ENCODE measurements at regions of chr13 and their contacts with region 1.

Region 1: GRCh38 chr13:109786457-109787134 is at the start of gene IRS2:
- DNase-seq: peak; percentile 85
- H3K4me3 ChIP-seq: peak within 1 kb of the TSS; percentile 51 to 78 (median 58)
- H3K27ac ChIP-seq: no peak within 1 kb of the TSS
- H3K4me1 ChIP-seq: peaks cover 3% of the 10 kb centered on the region
- H3K27me3 ChIP-seq: peaks cover 27 to 46% of the 10 kb centered on the region in 2 experiments
- CTCF ChIP-seq: no peak
- POLR2A ChIP-seq: peak; percentile 82
- total RNA-seq, gene IRS2: 4.4 and 5.9 TPM in 2 replicates

Region 2: GRCh38 chr13:108961542-108962125 is 825.0 kb before region 1 on chr13:
- CTCF ChIA-PET with region 1: interaction called, 18 read pairs
- POLR2A ChIA-PET with region 1: no interaction called
- dilution Hi-C with region 1: no loop called
- intact Hi-C with region 1: loop called (anchors 1 kb)
- DNase-seq: peak; percentile 60
- H3K4me3 ChIP-seq: no peak overlapping the region
- H3K27ac ChIP-seq: no peak overlapping the region
- H3K4me1 ChIP-seq: peaks cover 8% of the 10 kb centered on the region
- H3K27me3 ChIP-seq: no peaks in the 10 kb centered on the region
- CTCF ChIP-seq: peak; percentile 49 to 67
- POLR2A ChIP-seq: no peak

Region 3: GRCh38 chr13:108993346-108993745 is 793.2 kb before region 1 on chr13:
- CTCF ChIA-PET with region 1: no interaction called
- POLR2A ChIA-PET with region 1: no interaction called
- dilution Hi-C with region 1: no loop called
- intact Hi-C with region 1: no loop called
- DNase-seq: no peak
- H3K4me3 ChIP-seq: no peak overlapping the region
- H3K27ac ChIP-seq: no peak overlapping the region
- H3K4me1 ChIP-seq: no peaks in the 10 kb centered on the region
- H3K27me3 ChIP-seq: no peaks in the 10 kb centered on the region
- CTCF ChIP-seq: no peak
- POLR2A ChIP-seq: no peak

Region 4: DNA sequence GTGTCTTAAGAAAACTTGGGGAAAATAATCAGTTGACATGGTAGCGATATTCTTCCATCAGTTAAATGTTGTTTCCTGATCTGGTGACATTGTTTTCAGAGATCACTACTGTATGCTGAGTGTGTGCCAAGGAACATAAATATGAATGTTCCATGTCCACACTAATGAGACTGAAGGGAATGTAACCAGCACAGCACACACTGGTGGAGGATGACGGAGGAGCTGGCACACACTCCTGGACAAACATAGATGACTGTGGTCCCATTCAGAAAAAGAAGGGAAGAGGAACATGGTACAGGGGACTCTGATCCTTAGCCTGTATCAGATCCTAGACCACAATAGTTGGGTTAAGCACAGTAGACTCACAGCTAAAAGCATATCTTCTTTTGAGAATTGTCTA is 582.3 kb before region 1 on chr13:
- CTCF ChIA-PET with region 1: no interaction called
- POLR2A ChIA-PET with region 1: no interaction called
- dilution Hi-C with region 1: no loop called
- intact Hi-C with region 1: loop called (anchors 5 kb)
- DNase-seq: peak; percentile 82
- H3K4me3 ChIP-seq: no peak overlapping the region
- H3K27ac ChIP-seq: peak overlapping the region; percentile 20
- H3K4me1 ChIP-seq: peaks cover 35% of the 10 kb centered on the region
- H3K27me3 ChIP-seq: no peaks in the 10 kb centered on the region
- CTCF ChIP-seq: no peak
- POLR2A ChIP-seq: no peak

Region 5: DNA sequence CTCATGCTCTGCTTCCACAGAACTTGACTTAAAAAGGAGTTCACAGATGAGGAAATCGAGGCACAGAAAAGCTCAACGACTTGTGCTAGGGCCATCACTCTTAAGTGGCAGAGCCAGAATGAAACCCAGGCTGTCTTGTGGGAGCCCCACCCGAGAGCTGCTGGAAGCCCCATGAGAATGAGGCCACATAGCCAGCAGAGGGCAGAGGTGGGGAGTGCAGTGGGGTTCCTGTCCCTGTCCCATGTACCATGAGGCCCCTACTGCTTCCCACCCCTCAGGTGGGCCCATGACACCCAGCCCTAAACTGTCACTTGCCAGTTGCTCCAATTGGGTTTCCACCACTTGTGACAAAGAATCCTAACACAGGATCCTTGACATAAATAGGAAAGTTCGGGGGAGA is 176.1 kb before region 1 on chr13:
- CTCF ChIA-PET with region 1: no interaction called
- POLR2A ChIA-PET with region 1: no interaction called
- dilution Hi-C with region 1: no loop called
- intact Hi-C with region 1: loop called (anchors 1 kb)
- DNase-seq: no peak
- H3K4me3 ChIP-seq: no peak overlapping the region
- H3K27ac ChIP-seq: no peak overlapping the region
- H3K4me1 ChIP-seq: no peaks in the 10 kb centered on the region
- H3K27me3 ChIP-seq: no peaks in the 10 kb centered on the region
- CTCF ChIP-seq: peak in 1 of 2 donors; percentile 6
- POLR2A ChIP-seq: no peak

Region 6: DNA sequence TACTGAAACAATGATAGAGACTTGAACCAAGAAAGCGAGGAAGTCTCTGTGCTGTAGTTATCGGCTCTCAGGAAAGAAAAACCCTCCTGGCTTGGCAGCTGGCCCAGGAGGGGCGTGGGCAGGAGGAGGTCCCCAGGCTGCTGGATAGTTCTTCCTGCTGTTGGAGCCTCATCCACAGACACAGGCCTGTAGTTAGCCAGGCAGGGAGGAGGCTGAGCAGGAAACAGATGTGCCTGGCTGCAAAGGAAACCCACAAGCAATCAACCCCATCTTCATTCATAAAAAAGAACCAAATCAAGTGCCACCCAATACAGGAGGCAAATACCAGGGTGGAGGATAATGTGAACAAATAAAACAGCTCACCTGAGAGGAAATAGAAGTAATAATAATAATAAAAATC is 86.4 kb before region 1 on chr13:
- CTCF ChIA-PET with region 1: no interaction called
- POLR2A ChIA-PET with region 1: no interaction called
- dilution Hi-C with region 1: no loop called
- intact Hi-C with region 1: loop called (anchors 2 kb)
- DNase-seq: peak; percentile 71
- H3K4me3 ChIP-seq: no peak overlapping the region
- H3K27ac ChIP-seq: no peak overlapping the region
- H3K4me1 ChIP-seq: no peaks in the 10 kb centered on the region
- H3K27me3 ChIP-seq: no peaks in the 10 kb centered on the region
- CTCF ChIP-seq: no peak
- POLR2A ChIP-seq: no peak